ENCODE measurements at regions of chr11 and their contacts with region 1.

Region 1: DNA sequence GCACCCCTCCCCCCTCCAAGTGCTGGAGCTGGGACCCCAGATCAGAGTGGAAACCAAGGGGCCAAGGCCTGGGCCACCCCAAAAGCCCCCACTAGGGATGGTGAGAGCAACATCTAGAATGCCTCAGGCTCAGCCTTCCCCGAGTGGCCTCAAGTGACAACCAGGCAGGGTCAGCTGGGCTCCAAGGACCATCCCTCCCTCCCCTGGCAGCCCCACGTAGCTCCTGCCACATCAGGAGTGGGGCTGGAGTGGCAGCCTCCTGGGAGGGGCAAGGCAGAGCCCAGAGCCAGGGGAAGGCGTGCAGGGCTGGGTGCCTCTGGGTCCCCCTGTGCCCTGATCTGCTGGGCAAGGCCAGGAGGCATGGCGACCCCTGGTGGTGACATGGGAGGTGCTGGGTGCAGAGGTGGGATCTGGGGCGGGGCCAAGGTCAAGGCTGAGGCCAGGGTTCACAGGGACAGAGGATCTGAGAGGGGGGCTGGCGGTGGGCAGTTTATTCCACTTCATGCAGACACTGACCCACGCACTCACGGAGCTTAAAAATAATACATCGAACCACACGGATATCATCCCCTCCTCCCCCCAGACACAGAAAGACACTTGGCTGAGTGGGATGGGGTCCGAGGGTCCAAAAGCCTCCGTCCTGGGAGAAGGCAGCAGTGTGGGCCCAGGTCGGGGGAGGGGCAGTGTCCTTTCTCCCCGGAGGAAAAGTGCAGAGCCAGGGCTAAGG is 15.8 kb upstream of the EHD1 start:
- DNase-seq: peak; percentile 65

Region 2: DNA sequence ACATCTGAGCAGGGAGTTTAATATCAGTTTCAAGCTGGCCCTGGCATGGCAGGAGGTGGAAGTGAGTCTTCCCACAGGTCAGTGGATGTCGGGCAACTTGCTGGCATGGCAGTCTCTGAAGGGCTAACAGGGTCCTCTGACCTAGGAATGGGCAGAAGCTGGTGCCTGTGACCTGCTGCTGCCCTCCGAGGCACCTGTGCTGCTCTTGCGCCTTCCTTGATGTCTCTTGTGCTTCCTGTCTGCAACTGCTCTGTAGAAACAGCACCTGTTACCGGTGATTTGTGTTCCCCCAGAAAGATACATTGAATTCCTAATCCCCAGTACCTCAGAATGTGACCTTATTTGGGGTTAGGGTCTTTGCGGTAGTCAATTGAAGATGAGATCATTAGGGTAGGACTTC is 424.9 kb before region 1 on chr11:
- in situ Hi-C with region 1: no loop called
- DNase-seq: no peak

Region 3: DNA sequence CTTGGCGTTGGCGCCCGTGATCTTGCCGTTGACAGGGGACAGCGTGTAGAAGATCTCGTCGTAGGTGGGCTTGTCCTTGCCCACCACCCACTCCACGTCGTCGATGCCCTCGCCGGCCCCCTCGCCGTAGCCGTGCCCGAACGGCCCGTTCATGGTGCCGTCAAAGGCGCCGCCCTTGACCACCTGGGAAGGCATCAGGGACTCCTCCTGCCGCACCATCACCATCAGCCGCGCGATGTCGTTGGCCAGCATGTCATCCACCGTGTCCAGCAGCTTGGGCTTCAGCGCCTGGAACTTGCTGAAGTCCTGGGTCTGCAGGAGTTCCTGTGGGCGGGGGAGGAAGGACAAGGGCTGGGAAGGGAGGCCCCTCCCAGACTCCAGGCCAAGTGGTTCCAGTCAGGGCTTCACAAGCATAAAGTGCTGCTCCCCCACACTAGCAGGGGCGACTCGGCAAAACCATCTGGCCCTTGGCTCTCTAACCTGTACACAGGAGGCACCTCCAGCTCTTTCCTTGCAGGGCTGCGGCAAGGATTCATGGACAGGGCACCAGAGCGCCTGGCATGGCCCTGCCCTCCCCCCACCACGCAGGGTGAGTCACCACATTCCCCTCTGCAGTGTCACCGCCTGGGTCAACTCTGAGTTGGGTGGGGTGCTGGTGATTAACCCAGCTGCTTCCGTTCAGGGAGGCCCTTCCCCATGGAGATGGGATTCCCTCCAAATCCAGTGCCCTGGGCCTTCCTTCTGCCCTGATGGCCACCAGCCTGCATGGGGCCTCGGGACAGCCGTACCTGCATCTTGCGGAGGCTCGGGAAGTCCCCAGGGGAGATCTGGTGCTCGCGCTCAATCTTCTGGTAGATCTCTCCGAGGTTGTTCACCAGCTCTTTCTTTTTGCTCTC is 39.5 kb before region 1 on chr11:
- in situ Hi-C with region 1: loop called (anchors 5 kb)
- DNase-seq: peak; percentile 94

Region 4: DNA sequence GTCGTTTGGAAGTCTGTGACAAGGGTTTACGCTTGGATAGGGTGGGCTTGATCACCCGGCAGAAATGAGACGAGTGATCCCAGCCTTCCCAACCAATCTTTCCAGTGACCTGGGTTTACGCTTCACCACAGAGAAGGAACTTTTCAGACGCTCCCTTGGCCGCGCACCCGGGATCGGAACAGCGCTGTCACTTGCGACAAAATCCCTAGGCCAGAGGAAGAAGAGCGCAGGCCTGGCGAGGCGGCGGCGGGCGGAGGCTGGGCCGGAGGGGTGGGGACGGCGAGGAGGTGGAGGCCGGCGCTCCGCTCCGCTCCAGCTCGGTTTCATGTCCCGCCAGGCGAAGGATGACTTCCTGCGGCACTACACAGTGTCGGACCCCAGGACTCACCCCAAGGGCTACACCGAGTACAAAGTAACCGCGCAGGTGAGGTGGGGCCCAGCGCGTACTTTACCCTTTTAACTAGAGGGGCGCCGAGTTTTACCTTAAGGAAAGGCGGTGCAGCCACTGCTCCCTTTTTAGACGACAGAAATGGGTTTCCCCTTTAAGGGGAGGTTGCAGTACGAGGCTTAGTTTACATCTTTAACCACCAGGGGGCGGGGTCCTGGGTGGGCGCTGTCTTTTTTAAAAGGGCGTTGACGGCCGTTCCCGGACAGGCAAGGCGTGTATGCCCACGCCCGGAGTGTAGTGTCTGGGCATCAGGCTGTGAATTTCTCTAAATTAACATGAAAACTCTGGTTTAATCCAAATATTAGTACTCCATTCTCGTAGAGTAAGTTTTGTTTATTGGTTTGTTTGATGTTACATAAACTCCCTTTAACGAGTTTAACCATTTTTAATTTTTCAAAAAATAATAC is 133.2 kb after region 1 on chr11 and contains the start of gene SNX15:
- in situ Hi-C with region 1: no loop called
- DNase-seq: peak; percentile 93

Region 5: DNA sequence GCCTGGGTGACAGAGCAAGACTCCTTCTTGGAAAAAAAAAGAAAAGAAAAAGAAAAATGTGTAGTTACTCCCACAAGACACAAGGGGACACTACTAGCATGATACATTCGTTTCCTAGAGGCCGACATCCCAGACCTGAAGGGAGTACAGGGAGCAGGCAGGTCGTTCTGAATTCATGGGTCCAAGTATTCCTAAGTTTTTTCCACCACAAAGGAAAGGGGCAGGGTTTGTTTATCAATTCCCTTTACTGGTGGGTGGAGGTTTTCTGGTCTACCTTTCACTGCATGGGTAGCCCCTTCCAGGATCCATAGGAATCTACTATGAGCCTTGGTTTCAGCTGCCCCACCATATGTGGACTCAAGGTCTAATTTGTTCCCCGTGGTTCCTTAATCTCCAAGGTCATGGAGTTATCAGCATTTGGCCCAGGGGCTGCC is 472.1 kb after region 1 on chr11:
- in situ Hi-C with region 1: no loop called
- DNase-seq: peak; percentile 79